ENCODE measurements at regions of chr3 and their contacts with region 1.

Region 1: GRCh38 chr3:156542715-156543555 is 12.0 kb downstream of the SSR3 start:
- DNase-seq: no peak
- H3K4me3 ChIP-seq: no peak overlapping the region
- CTCF ChIP-seq: no peak
- POLR2A ChIP-seq: no peak

Region 2: DNA sequence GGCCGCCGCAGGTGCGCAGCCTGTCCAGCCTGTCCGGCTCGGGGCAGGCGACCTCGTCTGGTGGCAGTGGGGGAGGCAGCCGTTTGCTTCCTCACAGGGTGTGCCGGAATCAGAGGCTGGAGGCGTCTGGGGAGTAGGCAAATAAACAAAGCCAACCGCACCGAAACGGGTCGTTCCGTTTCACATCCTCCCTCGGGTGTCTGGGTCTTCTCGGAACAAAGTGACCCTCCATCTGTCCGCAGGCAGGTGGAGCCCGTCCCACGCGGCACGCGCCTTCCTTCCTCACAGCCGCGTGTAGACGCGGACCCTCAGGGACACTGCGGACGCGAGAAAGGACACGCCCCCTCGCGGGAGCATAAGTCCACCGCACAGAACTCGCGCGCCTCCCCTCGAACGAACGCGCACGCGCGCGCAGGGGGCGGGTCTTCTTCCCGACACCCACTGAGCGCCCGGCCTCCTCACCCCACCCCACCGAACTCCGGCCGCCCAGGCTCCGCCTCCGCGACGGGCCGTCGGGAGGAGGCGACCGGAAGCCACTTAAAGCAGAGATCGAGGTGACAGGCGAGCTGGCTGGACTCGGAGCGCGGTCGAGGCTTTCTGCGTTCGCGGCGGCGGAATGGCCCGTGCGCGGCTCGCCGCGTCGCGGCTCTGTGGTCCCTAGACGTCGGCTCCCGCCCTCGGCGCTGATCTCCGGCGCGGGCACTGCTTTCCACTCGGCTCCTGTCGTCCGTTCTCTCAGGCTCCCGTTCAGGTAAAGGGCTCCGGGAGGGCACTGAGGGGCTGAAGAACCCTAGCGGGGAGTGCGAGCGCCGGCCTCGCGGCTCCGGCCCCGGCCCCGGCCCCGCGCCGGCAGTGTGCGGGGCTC is 131.3 kb after region 1 on chr3 and contains the start of gene TIPARP:
- intact Hi-C with region 1: no loop called
- DNase-seq: peak; percentile 99 to 100
- H3K4me3 ChIP-seq: peak within 1 kb of the TSS; percentile 92
- CTCF ChIP-seq: peak in 1 of 3 donors; percentile 76
- POLR2A ChIP-seq: peak in 1 of 2 donors; percentile 87
- total RNA-seq, gene TIPARP: 59.1 to 70.3 (median 68.5) TPM

Region 3: DNA sequence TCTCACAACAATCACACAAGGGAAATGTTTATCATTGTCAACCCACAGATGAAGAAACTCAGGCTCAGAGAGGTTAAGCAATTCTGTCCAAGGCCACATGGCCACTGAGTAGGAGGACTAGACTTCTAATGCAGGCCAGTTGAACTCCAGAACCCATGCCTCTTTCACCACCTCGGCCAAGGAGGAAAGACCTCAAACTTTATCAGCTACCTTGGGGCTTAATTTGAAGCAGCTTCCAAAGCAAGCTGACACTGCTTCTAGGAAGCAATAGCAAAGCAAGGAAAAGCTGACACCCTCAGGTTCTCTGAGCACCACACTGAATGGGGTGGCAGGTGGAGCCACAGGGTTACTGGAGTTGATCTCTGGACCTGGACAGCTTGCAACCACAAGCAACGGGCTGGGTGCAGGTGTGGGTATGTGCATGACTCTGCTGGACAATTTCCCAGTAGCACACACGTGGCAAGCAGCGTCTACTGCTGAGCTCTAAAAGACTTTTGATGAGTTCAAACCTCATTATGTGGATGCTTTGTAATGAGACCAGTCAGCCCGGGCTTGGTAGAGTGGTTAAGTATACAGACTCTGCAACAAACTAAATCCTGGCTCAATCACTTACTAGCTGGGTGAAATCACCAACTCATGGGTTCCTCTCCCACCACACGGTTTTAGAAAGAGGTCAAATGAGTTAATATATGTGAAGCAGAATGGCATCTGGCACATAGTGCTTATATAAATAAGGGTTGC is 593.9 kb after region 1 on chr3:
- intact Hi-C with region 1: loop called (anchors 5 kb)
- DNase-seq: no peak
- H3K4me3 ChIP-seq: no peak overlapping the region
- CTCF ChIP-seq: no peak
- POLR2A ChIP-seq: no peak

Measured in lower leg skin (tissue), 4 donors.